ENCODE measurements at regions of chrX and their contacts with region 1.

Region 1: DNA sequence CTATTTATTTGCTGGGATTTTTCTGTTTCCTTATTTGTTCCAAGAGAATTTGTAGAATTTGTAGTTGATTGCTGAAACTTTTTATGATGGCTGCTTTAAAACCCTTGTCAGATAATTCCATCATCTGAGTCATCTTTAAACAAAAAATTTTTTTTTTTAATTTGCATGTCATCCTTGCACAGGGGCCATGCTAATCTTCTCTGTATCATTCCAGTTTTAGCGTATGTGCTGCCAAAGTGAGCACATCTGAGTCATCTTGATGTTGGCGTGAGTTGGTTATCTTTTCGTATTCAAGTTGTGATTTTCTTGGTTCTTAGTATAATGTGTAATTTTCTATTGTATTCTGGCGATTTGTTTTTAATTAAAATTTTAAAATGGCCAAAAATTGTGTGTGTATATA is 18.7 kb upstream of the ZNF157 start:
- DNase-seq: no peak
- H3K4me3 ChIP-seq: no peak overlapping the region
- H3K27ac ChIP-seq: no peak overlapping the region
- H3K4me1 ChIP-seq: no peaks in the 10 kb centered on the region
- H3K27me3 ChIP-seq: no peaks in the 10 kb centered on the region
- CTCF ChIP-seq: no peak
- POLR2A ChIP-seq: no peak

Region 2: DNA sequence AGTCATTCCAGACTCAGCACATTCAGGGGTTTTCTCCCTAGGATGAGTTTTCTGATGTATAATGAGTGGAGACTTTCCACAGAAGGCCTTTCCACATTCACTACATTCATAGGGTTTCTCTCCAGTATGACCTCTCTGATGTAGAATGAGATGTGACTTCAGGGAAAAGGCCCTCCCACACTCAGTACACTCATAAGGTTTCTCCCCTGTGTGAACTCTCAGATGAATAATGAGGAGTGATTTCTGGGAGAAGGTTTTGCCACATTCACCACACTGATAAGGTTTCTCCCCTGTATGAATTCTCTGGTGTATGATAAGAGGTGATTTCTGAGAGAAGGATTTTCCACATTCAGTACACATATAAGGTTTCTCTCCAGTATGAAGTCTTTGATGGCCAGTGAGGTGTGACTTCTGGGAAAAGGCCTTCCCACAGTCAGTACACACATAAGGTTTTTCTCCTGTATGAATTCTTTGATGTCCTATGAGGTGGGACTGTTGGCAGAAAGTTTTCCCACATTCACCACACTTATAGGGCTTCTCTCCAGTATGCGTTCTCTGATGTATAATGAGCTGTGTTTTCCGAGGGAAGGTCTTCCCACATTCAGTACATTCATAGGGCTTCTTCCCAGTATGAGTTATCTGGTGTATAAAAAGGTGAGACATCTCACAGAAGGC is 707.1 kb after region 1 on chrX:
- intact Hi-C with region 1: loop called (anchors 5 kb)
- DNase-seq: no peak
- H3K4me3 ChIP-seq: no peak overlapping the region
- H3K27ac ChIP-seq: no peak overlapping the region
- H3K4me1 ChIP-seq: no peaks in the 10 kb centered on the region
- H3K27me3 ChIP-seq: no peaks in the 10 kb centered on the region
- CTCF ChIP-seq: no peak
- POLR2A ChIP-seq: no peak